ENCODE measurements at regions of chr2 and their contacts with region 1.

Region 1: DNA sequence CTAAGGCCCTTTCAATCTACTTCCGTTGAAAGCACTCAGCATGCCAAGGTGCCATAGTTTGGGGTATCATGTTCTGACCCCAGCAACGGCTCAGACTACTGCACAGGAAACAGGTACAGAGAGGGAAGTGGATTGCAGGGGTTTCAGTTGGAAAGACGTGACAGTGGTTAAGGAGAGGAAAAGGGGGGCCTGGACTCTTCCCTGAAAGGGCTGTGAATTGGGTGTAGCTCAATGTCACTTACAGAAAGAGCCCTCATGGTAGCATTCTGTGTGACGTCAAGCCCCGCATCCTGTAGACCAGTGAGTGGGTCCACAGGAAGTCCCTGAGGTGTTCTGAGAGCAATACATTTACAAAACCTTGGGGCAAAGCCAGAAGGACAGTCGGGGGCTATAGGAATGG is 121.5 kb upstream of the GYPC start:
- DNase-seq: peak in 1 of 2 donors; percentile 59
- ATAC-seq: peak; percentile 48 to 95 (median 78)
- H3K4me3 ChIP-seq: no peak overlapping the region
- H3K27ac ChIP-seq: peak overlapping the region in 6 of 10 donors; percentile 28 to 72 (median 34)
- H3K4me1 ChIP-seq: peaks cover 0 to 20% (median 0%) of the 10 kb centered on the region in 9 donors
- H3K27me3 ChIP-seq: peaks cover 0 to 7% (median 0%) of the 10 kb centered on the region in 7 donors
- CTCF ChIP-seq: no peak

Region 2: GRCh38 chr2:126579868-126580267 is 45.4 kb after region 1 on chr2:
- intact Hi-C with region 1: loop called in 1 of 10 experiments (anchors 5 kb)
- DNase-seq: no peak
- ATAC-seq: no peak
- H3K4me3 ChIP-seq: no peak overlapping the region
- H3K27ac ChIP-seq: no peak overlapping the region
- H3K4me1 ChIP-seq: no peaks in the 10 kb centered on the region
- H3K27me3 ChIP-seq: no peaks in the 10 kb centered on the region
- CTCF ChIP-seq: no peak

Region 3: GRCh38 chr2:126657636-126658318 is 123.3 kb after region 1 on chr2:
- intact Hi-C with region 1: loop called in 3 of 10 experiments (anchors 2 to 10 kb)
- DNase-seq: peak; percentile 76 to 83
- ATAC-seq: peak; percentile 50 to 91 (median 72)
- H3K4me3 ChIP-seq: peak overlapping the region; percentile 67 to 90 (median 77)
- H3K27ac ChIP-seq: peak overlapping the region; percentile 96 to 100 (median 99)
- H3K4me1 ChIP-seq: peaks cover 22 to 77% (median 70%) of the 10 kb centered on the region in 9 donors
- H3K27me3 ChIP-seq: no peaks in the 10 kb centered on the region
- CTCF ChIP-seq: peak in 1 of 9 donors; percentile 6

Measured in heart right ventricle (tissue), 16 donors.